Mammary epithelial cell (primary cell): ENCODE measurements at regions of chr1 and their contacts with region 1.

Region 1: DNA sequence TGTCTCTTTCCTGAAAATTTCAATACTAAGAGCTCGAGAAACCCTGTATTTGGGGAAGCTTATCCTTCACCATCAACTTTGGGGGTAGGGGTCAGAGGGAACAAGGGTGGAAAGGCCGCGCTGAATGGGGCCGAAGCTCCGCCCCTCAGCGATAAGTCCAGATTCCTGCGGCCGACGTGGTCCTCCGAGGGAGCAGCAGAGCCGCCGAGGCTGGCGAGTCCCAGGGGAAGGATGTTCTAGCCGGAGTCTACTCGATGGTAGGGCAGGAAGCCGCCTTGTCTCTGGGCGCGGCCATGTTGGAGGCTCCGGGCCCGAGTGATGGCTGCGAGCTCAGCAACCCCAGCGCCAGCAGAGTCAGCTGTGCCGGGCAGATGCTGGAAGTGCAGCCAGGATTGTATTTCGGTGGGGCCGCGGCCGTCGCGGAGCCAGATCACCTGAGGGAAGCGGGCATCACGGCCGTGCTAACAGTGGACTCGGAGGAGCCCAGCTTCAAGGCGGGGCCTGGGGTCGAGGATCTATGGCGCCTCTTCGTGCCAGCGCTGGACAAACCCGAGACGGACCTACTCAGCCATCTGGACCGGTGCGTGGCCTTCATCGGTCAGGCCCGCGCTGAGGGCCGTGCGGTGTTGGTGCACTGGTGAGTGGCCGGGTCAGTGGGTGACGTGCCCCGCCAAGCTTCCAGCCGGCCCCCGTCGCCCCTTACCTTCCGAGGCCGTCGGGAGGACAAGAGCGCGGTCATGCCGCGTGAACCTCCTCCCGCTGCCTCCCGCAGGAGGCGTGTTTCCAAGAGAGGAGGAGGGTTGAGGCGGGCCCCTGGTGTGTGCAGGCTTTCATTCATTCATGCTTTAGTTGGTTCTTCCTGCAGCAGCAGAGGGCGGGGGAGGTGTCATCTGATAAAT is at the start of gene DUSP12:
- DNase-seq: peak; percentile 94
- H3K4me3 ChIP-seq: peak within 1 kb of the TSS; percentile 62 to 97 (median 85)
- H3K27ac ChIP-seq: peak within 1 kb of the TSS; percentile 77
- H3K4me1 ChIP-seq: peaks cover 12% of the 10 kb centered on the region
- H3K27me3 ChIP-seq: no peaks in the 10 kb centered on the region
- CTCF ChIP-seq: peak in 1 of 2 donors; percentile 28
- total RNA-seq, gene DUSP12: 22.3 to 32.4 TPM

Region 2: GRCh38 chr1:161177112-161177935 is 572.4 kb before region 1 on chr1 and contains the start of gene B4GALT3:
- CTCF ChIA-PET with region 1: no interaction called
- dilution Hi-C with region 1: no loop called
- in situ Hi-C with region 1: loop called in 1 of 2 experiments (anchors 25 kb)
- intact Hi-C with region 1: loop called (anchors 10 kb)
- DNase-seq: peak; percentile 76
- H3K4me3 ChIP-seq: peak within 1 kb of the TSS; percentile 76 to 97 (median 83)
- H3K27ac ChIP-seq: peak within 1 kb of the TSS; percentile 88
- H3K4me1 ChIP-seq: peaks cover 17% of the 10 kb centered on the region
- H3K27me3 ChIP-seq: no peaks in the 10 kb centered on the region
- CTCF ChIP-seq: peak in 1 of 2 donors; percentile 34
- total RNA-seq, gene B4GALT3: 25.8 to 32.1 TPM

Region 3: DNA sequence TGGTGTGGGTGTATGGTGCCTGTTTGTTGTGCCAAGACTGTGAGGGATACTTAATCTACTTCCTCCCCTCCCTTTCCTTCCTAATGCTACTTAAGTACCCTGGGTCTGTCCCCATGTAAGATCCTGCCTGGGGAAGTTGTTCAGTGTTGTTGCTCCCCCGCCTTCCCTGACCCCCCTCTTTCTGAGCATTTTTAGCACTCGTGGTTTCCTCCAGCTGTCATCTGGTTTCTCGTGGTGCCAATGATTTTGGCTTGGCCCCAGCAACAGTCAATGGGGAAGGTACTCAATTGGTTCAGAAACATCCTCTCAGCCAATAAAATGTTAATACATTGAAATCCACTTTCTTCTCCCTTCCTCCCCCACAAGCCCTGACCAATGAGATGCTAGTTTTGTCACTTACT is 564.5 kb before region 1 on chr1:
- CTCF ChIA-PET with region 1: no interaction called
- dilution Hi-C with region 1: no loop called
- in situ Hi-C with region 1: loop called in 1 of 2 experiments (anchors 25 kb)
- intact Hi-C with region 1: loop called (anchors 10 kb)
- DNase-seq: no peak
- H3K4me3 ChIP-seq: no peak overlapping the region
- H3K27ac ChIP-seq: no peak overlapping the region
- H3K4me1 ChIP-seq: peaks cover 18% of the 10 kb centered on the region
- H3K27me3 ChIP-seq: no peaks in the 10 kb centered on the region
- CTCF ChIP-seq: no peak

Region 4: DNA sequence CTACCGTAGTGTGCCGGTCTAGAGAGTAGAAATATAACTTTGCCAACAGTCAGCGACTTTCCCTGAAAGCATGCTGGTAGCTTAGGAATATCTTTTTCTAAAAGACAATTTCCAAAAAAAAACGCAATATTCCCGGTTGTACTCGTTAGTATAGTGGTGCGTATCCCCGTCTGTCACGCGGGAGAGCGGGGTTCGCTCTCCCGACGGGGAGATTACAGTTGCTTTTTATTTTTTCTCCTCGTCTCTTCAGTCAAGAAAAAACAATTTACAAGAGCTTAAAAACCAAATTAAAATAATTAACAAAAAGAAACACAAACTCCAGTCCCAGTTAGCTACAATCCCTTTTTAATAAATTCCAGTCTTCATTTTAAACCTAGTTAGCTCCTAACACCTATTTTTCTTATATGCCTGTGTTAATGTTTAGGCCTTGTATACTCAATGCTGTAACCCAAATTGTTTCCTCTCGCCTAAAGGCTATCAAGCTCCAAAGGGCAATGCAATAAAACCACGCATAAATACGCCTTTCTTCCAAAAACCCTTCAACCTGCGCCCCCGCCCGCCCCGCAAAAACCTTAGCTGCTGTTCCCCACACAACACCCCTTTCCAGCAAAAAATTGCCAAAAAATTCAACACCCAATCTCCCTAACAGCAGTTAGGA is 217.6 kb before region 1 on chr1:
- CTCF ChIA-PET with region 1: no interaction called
- dilution Hi-C with region 1: no loop called
- in situ Hi-C with region 1: loop called in 1 of 2 experiments (anchors 25 kb)
- intact Hi-C with region 1: loop called (anchors 10 kb)
- DNase-seq: no peak
- H3K4me3 ChIP-seq: no peak overlapping the region
- H3K27ac ChIP-seq: no peak overlapping the region
- H3K4me1 ChIP-seq: peaks cover 3% of the 10 kb centered on the region
- H3K27me3 ChIP-seq: no peaks in the 10 kb centered on the region
- CTCF ChIP-seq: no peak

Region 5: GRCh38 chr1:161766102-161766981 is 16.6 kb after region 1 on chr1 and contains the start of gene ATF6:
- CTCF ChIA-PET with region 1: no interaction called
- dilution Hi-C with region 1: no loop called
- in situ Hi-C with region 1: no loop called
- intact Hi-C with region 1: loop called (anchors 1 kb)
- DNase-seq: peak; percentile 93
- H3K4me3 ChIP-seq: peak within 1 kb of the TSS; percentile 61 to 94 (median 87)
- H3K27ac ChIP-seq: peak within 1 kb of the TSS; percentile 99
- H3K4me1 ChIP-seq: peaks cover 9% of the 10 kb centered on the region
- H3K27me3 ChIP-seq: no peaks in the 10 kb centered on the region
- CTCF ChIP-seq: no peak
- total RNA-seq, gene ATF6: 21.9 to 32.7 TPM